PC-9 (cell line): ENCODE measurements at regions of chr3 and their contacts with region 1.

Region 1: DNA sequence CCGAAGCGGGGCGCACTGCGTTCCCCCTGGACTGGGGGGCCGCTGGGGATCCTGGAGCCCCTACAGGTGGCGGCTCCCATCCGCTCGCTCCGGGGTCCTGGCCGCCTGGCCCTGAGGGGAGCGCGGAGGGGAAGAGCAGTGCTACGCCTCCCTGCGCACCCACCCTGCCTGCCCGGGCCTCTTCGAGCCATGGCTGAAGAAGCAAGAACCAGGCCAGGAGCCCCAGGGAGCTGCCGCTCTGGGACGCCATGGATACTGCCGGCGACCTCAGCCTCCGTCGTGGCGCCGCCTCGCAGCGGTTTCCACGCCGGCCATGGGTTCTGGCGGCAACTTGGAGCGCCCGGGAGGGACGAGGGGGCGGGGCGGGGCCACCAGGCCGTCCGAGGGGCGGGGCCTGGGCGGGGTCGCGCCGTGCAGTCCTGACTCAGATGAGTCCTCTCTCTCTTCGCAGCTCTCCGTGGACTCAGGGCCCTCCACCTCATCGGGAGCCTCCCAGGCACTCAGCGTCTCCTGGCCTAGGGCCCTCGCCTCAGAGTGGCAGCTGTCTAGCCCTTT is 50.9 kb downstream of the MYL3 start:
- DNase-seq: peak in 1 of 2 experiments; percentile 63
- H3K4me3 ChIP-seq: no peak overlapping the region
- H3K27ac ChIP-seq: no peak overlapping the region
- H3K4me1 ChIP-seq: no peaks in the 10 kb centered on the region
- H3K27me3 ChIP-seq: no peaks in the 10 kb centered on the region
- CTCF ChIP-seq: no peak

Region 2: DNA sequence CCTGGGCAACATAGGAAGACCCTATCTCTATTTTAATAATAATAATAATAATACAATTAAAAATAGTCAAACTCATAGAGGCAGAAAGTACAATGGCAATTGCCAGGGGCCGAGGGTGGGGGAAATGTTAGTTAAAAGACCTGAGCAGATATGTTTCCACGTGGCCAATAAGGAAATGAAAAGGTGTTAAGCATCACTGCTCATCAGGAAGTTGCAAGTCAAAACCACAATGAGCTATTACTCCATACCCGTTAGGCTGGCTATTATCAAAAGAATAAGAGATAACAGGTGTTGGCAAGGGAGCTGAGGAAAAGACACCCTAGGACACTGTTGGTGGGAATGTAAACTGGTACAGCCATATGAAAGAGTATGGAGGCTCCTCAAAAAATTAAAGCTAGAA is 34.2 kb before region 1 on chr3:
- CTCF ChIA-PET with region 1: no interaction called
- POLR2A ChIA-PET with region 1: no interaction called
- intact Hi-C with region 1: no loop called
- DNase-seq: no peak
- H3K4me3 ChIP-seq: no peak overlapping the region
- H3K27ac ChIP-seq: no peak overlapping the region
- H3K4me1 ChIP-seq: no peaks in the 10 kb centered on the region
- H3K27me3 ChIP-seq: peaks cover 18% of the 10 kb centered on the region
- CTCF ChIP-seq: no peak

Region 3: DNA sequence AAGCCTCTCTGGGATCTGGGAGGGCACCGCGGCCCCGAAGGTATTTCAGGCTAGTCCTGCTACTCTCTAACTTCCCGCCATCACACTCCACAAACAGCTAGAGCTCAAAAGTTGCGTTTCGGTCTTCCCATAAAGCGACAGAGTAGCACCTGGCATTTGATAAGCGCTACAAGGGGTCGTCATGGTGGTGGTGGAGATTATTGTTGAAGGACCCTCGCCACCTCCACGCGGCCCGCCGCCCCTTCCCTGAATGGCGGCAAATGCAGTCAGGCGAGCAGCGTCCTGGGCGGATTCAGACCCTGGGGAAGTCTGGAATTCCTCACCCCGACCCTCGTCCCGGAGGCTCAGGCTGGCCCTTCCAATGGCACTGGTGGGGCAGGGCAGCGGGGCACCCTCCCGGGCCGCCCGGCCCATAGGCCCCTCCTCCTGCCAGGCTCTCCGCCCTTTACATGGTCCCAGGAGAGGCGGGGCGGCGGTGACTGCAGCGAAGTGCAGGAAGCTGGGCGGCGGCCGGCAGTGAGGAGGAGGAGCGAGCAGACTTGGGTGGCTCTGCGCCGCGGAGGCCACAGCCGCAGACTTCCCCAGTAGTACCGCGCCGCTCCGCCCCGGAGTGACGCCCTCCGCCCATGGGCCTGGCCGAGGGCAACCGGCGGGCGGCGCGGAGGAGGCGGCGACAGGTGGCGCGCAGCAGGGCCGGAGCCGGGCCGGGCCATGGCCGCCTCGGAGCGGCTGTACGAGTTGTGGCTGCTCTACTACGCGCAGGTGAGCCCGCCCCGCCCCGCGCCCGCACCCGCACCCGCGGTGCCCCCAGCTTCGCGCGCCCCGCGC is 167.1 kb after region 1 on chr3 and contains the start of gene NBEAL2:
- CTCF ChIA-PET with region 1: no interaction called
- POLR2A ChIA-PET with region 1: no interaction called
- intact Hi-C with region 1: no loop called
- DNase-seq: peak; percentile 81 to 95
- H3K4me3 ChIP-seq: peak within 1 kb of the TSS; percentile 85
- H3K27ac ChIP-seq: no peak within 1 kb of the TSS
- H3K4me1 ChIP-seq: peaks cover 55% of the 10 kb centered on the region
- H3K27me3 ChIP-seq: no peaks in the 10 kb centered on the region
- CTCF ChIP-seq: no peak
- total RNA-seq, gene NBEAL2: 69.7 and 81.0 TPM in 2 replicates

Region 4: GRCh38 chr3:47113669-47114365 is 301.5 kb after region 1 on chr3:
- CTCF ChIA-PET with region 1: interaction called, 27 read pairs
- POLR2A ChIA-PET with region 1: no interaction called
- intact Hi-C with region 1: no loop called
- DNase-seq: no peak
- H3K4me3 ChIP-seq: no peak overlapping the region
- H3K27ac ChIP-seq: no peak overlapping the region
- H3K4me1 ChIP-seq: no peaks in the 10 kb centered on the region
- H3K27me3 ChIP-seq: no peaks in the 10 kb centered on the region
- CTCF ChIP-seq: no peak